Activated T-helper 1 cell treated with anti-CD3 and anti-CD28 coated beads, Interleukin-12 subunit alpha, Interleukin-12 subunit beta, Interleukin-2, Interleukin-4 antibody, amounts not matched to agents 30 ng/mL and 10 ng/mL and 1 ng/mL, durations not matched to agents 14 hours and 24 hours and 36 hours (primary cell): ENCODE measurements at regions of chr2 and their contacts with region 1.

Region 1: DNA sequence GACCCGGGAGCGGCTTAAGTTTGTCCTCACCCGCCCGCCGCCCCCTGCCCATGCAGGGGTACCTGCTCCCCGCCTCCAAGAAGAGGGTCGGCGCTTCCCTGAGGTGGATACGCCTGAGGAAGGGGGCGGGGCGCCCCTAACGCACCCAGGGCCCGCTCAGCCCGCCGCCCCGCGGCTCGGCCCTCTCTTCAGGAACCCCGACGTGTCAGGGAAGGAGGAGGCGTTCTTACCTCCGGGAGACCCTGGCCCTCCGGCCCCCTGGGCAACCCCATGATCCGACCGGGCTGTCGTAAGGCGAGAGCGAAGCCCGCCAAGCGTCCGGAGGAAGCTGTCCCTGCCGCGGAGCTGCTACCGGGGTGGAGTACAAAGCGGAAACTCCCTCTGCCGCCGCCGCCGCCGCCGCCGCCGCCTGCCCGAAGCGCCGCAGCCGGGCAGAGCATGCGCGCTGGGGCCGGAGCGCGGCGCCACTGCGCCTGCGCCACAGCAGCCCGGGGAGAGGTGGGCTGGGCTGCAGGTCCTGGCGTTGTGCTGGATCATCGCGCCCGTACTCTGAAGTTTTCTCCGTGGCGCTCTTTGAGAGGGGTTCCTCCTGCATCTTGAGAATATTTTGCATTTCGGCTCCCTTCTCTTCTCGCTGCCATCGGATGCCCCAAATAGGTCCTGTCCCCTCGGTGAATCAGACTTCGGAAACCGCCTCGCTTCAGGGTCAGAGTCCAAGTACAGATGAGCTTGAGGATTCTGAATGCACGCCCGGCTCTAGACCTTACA is at the start of gene CCDC93:
- DNase-seq: peak; percentile 87
- H3K4me3 Mint-ChIP-seq: peak within 1 kb of the TSS; percentile 92
- H3K27ac Mint-ChIP-seq: peak within 1 kb of the TSS; percentile 88
- H3K4me1 Mint-ChIP-seq: peaks cover 42% of the 10 kb centered on the region
- H3K27me3 Mint-ChIP-seq: no peaks in the 10 kb centered on the region
- total RNA-seq, gene CCDC93: 33.3 and 34.4 TPM in 2 replicates

Region 2: GRCh38 chr2:118032169-118033013 is 18.5 kb after region 1 on chr2:
- intact Hi-C with region 1: loop called (anchors 1 kb)
- DNase-seq: no peak
- H3K4me3 Mint-ChIP-seq: no peak overlapping the region
- H3K27ac Mint-ChIP-seq: no peak overlapping the region
- H3K4me1 Mint-ChIP-seq: no peaks in the 10 kb centered on the region
- H3K27me3 Mint-ChIP-seq: peaks cover 32% of the 10 kb centered on the region

Region 3: DNA sequence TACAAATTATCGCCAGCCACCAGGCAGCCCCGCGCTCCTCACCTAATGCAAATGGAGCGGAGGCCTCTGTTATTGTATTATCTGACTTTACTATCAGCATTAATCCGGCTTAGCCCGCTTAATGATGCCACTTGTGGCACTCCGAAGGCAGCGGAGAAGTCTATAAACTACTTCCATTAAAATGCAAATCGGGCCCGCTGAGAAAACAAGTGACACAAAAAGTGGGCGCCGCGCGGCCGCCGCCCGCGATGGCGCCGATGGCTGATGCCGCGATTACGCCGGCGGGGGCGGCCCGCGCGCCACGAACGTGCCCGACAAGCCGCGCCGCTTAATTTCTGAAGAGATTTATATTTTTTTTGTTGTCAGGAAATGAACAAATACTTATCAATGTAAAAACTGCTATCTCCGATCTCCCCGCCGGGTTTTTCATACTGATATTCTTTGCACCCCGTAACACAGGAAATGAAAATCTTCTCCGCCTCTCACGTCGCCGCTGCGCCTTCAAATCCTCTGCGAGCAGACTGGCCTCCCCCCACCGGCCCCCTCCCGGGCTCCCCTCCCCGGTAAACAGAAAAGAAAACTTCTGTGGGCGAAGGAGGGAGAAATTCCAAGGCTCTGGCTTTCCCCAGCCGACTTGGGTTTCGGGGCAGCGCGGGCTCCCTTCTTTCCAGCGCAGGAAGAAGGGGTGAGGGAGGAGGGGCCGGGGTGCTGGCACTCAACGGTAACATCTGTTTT is 296.2 kb after region 1 on chr2:
- intact Hi-C with region 1: loop called (anchors 2 kb)
- DNase-seq: peak; percentile 55
- H3K4me3 Mint-ChIP-seq: peak overlapping the region; percentile 83
- H3K27ac Mint-ChIP-seq: peak overlapping the region; percentile 89
- H3K4me1 Mint-ChIP-seq: no peaks in the 10 kb centered on the region
- H3K27me3 Mint-ChIP-seq: peaks cover 25% of the 10 kb centered on the region